ENCODE measurements at regions of chr10 and their contacts with region 1.

Region 1: GRCh38 chr10:55330485-55330884 is 529.5 kb upstream of the PCDH15 start:
- DNase-seq: no peak
- H3K4me3 ChIP-seq: no peak overlapping the region
- H3K27me3 ChIP-seq: no peaks in the 10 kb centered on the region
- CTCF ChIP-seq: no peak

Region 2: DNA sequence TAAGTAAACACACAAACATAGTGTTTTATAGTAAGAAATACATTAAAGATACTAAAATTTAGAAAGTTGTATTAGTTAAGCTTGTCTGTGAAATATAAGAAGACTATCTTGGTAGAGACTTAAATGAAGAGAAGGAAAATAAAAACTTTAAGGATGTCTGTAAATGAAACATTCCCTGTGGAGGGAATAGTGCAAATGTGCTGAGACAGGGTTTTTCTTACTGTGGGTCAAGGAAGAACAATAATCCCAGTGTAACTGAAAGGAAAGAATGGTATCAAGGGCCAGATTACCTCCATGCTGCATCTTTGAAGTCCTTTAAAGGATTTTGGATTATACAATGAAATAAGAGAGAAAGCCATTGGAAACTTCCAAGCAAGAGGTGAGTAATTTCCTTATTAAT is 18.0 kb after region 1 on chr10:
- CTCF ChIA-PET with region 1: no interaction called
- POLR2A ChIA-PET with region 1: no interaction called
- DNase-seq: no peak
- H3K4me3 ChIP-seq: no peak overlapping the region
- H3K27me3 ChIP-seq: no peaks in the 10 kb centered on the region
- CTCF ChIP-seq: no peak

Region 3: DNA sequence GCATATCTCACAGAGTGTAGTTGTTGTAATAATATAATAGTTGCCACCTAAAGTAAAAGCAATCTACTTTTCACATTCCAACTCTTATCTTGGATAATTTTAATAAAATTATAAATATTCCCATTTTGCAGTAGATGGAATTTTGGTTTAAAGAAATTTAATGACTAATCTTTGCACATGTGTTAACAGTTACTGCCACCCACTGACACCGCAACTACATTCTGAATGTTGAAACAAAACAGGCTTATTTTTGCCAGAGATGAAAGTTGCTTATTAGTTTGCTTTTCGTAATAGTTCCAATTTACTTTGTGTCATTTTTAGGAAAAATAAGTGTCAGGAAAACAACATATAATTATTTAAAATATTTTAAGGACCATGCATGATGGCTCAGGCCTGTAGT is 28.1 kb after region 1 on chr10:
- CTCF ChIA-PET with region 1: no interaction called
- POLR2A ChIA-PET with region 1: interaction called, 10 read pairs
- DNase-seq: no peak
- H3K4me3 ChIP-seq: no peak overlapping the region
- H3K27me3 ChIP-seq: no peaks in the 10 kb centered on the region
- CTCF ChIP-seq: no peak